ENCODE measurements at regions of chr2 and their contacts with region 1.

Region 1: GRCh38 chr2:191165176-191165643 is 14.4 kb upstream of the STAT4 start:
- DNase-seq: peak; percentile 42
- ATAC-seq: peak; percentile 76
- H3K4me3 Mint-ChIP-seq: no peak overlapping the region
- H3K27ac Mint-ChIP-seq: peak overlapping the region; percentile 52
- H3K4me1 Mint-ChIP-seq: peaks cover 22% of the 10 kb centered on the region
- H3K27me3 Mint-ChIP-seq: peaks cover 8% of the 10 kb centered on the region

Region 2: DNA sequence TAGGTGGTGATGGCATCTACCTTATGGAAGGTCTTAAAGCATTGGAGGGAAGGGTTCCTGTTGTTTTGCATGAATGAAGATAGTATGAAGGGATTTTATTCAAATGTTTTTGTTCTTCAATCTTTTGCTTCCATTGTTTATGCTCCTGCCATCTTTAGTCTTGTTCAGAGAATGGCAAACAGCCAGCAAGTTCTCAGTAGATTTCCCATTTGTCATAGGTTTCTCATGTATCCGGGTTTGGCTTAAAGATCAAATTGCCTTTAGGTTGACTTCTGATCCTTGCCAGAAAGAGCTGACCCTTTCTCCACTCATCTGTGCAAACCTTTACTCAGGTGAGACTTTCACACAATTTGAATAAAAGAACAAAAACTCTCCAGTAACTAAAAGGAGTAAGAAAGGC is 29.8 kb after region 1 on chr2:
- CTCF ChIA-PET with region 1: interaction called, 15 read pairs
- POLR2A ChIA-PET with region 1: no interaction called
- intact Hi-C with region 1: no loop called
- DNase-seq: no peak
- ATAC-seq: no peak
- H3K4me3 Mint-ChIP-seq: no peak overlapping the region
- H3K27ac Mint-ChIP-seq: peak overlapping the region; percentile 98
- H3K4me1 Mint-ChIP-seq: peaks cover 57% of the 10 kb centered on the region
- H3K27me3 Mint-ChIP-seq: no peaks in the 10 kb centered on the region

Region 3: GRCh38 chr2:191245046-191245868 is 80.0 kb after region 1 on chr2 and contains the start of gene MYO1B:
- CTCF ChIA-PET with region 1: interaction called, 6 read pairs
- POLR2A ChIA-PET with region 1: no interaction called
- intact Hi-C with region 1: loop called (anchors 2 to 5 kb)
- DNase-seq: peak; percentile 81
- ATAC-seq: peak; percentile 84
- H3K4me3 Mint-ChIP-seq: peak within 1 kb of the TSS; percentile 79
- H3K27ac Mint-ChIP-seq: peak within 1 kb of the TSS; percentile 80
- H3K4me1 Mint-ChIP-seq: peaks cover 20% of the 10 kb centered on the region
- H3K27me3 Mint-ChIP-seq: peaks cover 20% of the 10 kb centered on the region
- total RNA-seq, gene MYO1B: 29.7 to 36.7 TPM

Region 4: GRCh38 chr2:191369036-191369435 is 203.8 kb after region 1 on chr2:
- CTCF ChIA-PET with region 1: interaction called, 3 read pairs
- POLR2A ChIA-PET with region 1: no interaction called
- intact Hi-C with region 1: loop called (anchors 1 kb)
- DNase-seq: no peak
- ATAC-seq: no peak
- H3K4me3 Mint-ChIP-seq: no peak overlapping the region
- H3K27ac Mint-ChIP-seq: no peak overlapping the region
- H3K4me1 Mint-ChIP-seq: no peaks in the 10 kb centered on the region
- H3K27me3 Mint-ChIP-seq: no peaks in the 10 kb centered on the region

Region 5: DNA sequence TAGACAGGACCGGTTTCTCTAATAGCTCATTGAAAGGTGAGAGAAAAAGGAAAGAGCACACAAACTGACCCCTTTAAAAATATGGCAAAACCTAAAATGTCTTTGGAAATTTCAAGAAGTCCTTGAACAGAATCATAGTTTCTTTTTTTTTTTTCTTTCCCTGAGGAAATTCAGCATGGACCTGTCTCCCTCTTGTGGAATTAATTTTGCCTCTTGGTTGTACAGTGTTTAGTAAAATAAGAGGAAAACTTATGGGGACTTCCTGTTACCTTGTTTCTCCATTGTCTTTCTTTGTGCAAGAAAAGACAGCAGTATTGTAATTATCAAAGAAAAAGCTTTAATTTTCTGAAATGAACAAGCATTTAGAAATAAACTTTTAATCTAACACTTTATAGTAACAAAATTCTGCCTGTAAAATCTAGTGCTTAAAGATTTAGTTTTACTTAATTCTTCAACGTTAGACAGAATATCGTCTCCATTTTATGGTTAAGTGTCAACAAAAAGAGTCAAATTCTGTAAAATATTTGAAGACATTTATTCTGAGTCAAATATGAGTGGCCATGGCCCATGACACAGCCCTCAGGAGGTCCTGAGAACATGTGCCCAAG is 336.5 kb after region 1 on chr2:
- CTCF ChIA-PET with region 1: interaction called, 12 read pairs
- POLR2A ChIA-PET with region 1: no interaction called
- intact Hi-C with region 1: loop called in 1 of 2 experiments (anchors 5 kb)
- DNase-seq: no peak
- ATAC-seq: no peak
- H3K4me3 Mint-ChIP-seq: no peak overlapping the region
- H3K27ac Mint-ChIP-seq: no peak overlapping the region
- H3K4me1 Mint-ChIP-seq: no peaks in the 10 kb centered on the region
- H3K27me3 Mint-ChIP-seq: peaks cover 6% of the 10 kb centered on the region

Region 6: GRCh38 chr2:191521608-191522208 is 356.5 kb after region 1 on chr2:
- CTCF ChIA-PET with region 1: interaction called, 83 read pairs
- POLR2A ChIA-PET with region 1: no interaction called
- intact Hi-C with region 1: loop called (anchors 1 kb)
- DNase-seq: no peak
- ATAC-seq: no peak
- H3K4me3 Mint-ChIP-seq: no peak overlapping the region
- H3K27ac Mint-ChIP-seq: no peak overlapping the region
- H3K4me1 Mint-ChIP-seq: no peaks in the 10 kb centered on the region
- H3K27me3 Mint-ChIP-seq: peaks cover 6% of the 10 kb centered on the region